Spleen (tissue), 13 donors: ENCODE measurements at regions of chr14 and their contacts with region 1.

Region 1: GRCh38 chr14:66359500-66359899 is 126.7 kb upstream of the CCDC196 start:
- DNase-seq: no peak
- H3K4me3 ChIP-seq: no peak overlapping the region
- H3K27ac ChIP-seq: no peak overlapping the region
- H3K4me1 ChIP-seq: no peaks in the 10 kb centered on the region
- H3K27me3 ChIP-seq: no peaks in the 10 kb centered on the region
- CTCF ChIP-seq: peak in 9 of 11 experiments; percentile 35 to 63 (median 61)
- POLR2A ChIP-seq: no peak

Region 2: GRCh38 chr14:66240092-66240491 is 119.4 kb before region 1 on chr14:
- intact Hi-C with region 1: no loop called
- DNase-seq: no peak
- H3K4me3 ChIP-seq: no peak overlapping the region
- H3K27ac ChIP-seq: no peak overlapping the region
- H3K4me1 ChIP-seq: no peaks in the 10 kb centered on the region
- H3K27me3 ChIP-seq: peaks cover 0 to 4% (median 0%) of the 10 kb centered on the region in 7 donors
- CTCF ChIP-seq: no peak
- POLR2A ChIP-seq: no peak

Region 3: GRCh38 chr14:67140556-67140955 is 781.1 kb after region 1 on chr14:
- intact Hi-C with region 1: loop called (anchors 10 kb)
- DNase-seq: no peak
- H3K4me3 ChIP-seq: no peak overlapping the region
- H3K27ac ChIP-seq: no peak overlapping the region
- H3K4me1 ChIP-seq: no peaks in the 10 kb centered on the region
- H3K27me3 ChIP-seq: no peaks in the 10 kb centered on the region
- CTCF ChIP-seq: no peak
- POLR2A ChIP-seq: no peak

Region 4: DNA sequence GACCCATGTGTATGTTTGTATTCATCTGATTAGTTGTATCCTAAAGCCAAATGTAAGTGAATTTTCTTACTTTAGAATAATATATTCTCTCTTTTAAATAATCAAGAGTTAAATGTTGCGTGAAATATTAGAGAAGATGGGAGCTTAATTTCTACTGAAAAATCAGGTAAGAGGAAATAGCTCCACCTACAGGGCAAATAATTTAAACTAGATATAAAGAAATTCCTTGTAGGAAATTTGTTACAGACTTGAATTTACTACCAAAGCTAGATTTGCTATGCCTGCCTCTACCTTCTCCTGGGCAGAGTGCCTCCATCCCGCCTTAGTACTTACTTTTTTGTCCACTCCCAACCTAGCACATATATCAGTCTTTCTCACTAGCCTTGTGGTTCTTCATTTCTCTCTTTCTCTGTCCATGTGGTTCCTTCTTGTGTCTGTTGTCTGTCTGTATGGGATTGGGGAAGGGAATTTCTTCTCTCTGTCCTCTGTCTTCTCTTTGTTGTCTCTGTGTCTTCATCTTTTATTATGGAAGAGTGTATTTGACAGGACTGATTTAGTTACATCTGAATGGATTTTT is 926.5 kb after region 1 on chr14:
- intact Hi-C with region 1: loop called (anchors 10 kb)
- DNase-seq: no peak
- H3K4me3 ChIP-seq: no peak overlapping the region
- H3K27ac ChIP-seq: no peak overlapping the region
- H3K4me1 ChIP-seq: peaks cover 0 to 8% (median 3%) of the 10 kb centered on the region in 6 donors
- H3K27me3 ChIP-seq: no peaks in the 10 kb centered on the region
- CTCF ChIP-seq: peak in 8 of 11 experiments; percentile 27 to 59 (median 48)
- POLR2A ChIP-seq: no peak